ENCODE measurements at regions of chr3 and their contacts with region 1.

Region 1: GRCh38 chr3:197354319-197355001 is 56.0 kb upstream of the DLG1 start:
- DNase-seq: peak; percentile 56 to 72
- ATAC-seq: peak; percentile 49 to 63
- H3K4me3 ChIP-seq: peak overlapping the region; percentile 33 to 43 (median 38)
- H3K27ac ChIP-seq: peak overlapping the region; percentile 73 to 83 (median 80)
- H3K4me1 ChIP-seq: peaks cover 34 to 46% of the 10 kb centered on the region in 2 donors
- H3K27me3 ChIP-seq: no peaks in the 10 kb centered on the region
- CTCF ChIP-seq: no peak
- POLR2A ChIP-seq: peak; percentile 23 to 49

Region 2: DNA sequence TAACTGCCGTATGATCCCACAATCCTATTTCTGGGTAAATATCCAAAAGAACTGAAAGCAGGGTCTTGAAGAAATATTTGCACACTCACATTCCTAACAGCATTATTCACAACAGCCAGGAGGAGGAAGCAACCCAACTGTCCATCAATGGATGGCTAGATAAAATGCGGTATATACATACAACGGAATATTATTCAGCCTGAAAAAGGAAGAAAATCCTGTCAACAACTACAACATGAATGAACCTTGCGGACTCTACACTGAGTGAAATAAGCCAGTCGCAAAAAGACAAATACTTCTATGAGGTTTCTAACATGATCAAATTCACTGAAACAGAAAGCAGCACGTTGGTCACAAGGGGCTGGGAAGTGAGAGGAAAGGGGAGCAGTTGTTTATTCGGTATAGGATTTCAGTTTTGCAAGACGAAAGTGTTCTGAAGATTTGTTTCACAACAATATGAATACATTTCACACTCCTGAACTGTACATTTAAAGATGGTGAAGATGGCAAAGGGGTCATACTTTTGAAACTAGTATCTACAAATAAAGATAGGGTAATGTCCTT is 62.3 kb before region 1 on chr3:
- in situ Hi-C with region 1: no loop called
- intact Hi-C with region 1: loop called (anchors 1 kb)
- DNase-seq: peak; percentile 54 to 56
- ATAC-seq: peak; percentile 92
- H3K4me3 ChIP-seq: peak overlapping the region in 1 of 4 donors; percentile 2
- H3K27ac ChIP-seq: peak overlapping the region; percentile 73 to 87 (median 84)
- H3K4me1 ChIP-seq: peaks cover 53 to 64% of the 10 kb centered on the region in 2 donors
- H3K27me3 ChIP-seq: no peaks in the 10 kb centered on the region
- CTCF ChIP-seq: no peak
- POLR2A ChIP-seq: no peak

Region 3: DNA sequence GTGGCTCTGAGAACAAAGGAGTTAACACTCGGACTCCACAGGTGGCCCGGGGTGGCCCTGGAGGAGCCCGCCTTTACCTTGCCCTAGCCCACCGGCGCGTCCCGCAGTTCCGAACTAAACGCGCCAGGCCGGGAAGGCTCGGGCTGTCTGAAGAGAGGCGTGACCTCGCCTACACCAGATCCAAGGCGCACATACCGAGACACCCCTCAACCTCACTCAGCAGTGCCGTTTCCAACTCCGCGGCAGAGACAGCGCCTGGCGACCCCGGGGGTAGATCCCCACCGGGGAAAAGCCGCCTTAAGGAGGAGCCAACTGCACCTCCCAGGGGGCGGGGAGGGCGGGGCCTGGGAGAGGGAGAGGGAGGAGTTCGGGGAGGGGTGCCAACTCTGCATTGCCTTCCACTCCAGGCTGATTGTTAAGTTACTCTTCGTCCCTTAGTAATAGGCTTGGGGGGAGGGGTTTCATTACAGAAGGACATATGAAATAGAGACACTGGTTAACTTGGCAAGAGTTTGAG is 56.1 kb before region 1 on chr3 and contains the start of gene DLG1:
- in situ Hi-C with region 1: no loop called
- intact Hi-C with region 1: loop called (anchors 2 kb)
- DNase-seq: peak; percentile 83 to 89
- ATAC-seq: peak; percentile 79
- H3K4me3 ChIP-seq: peak within 1 kb of the TSS; percentile 77 to 97 (median 84)
- H3K27ac ChIP-seq: peak within 1 kb of the TSS; percentile 87 to 97 (median 94)
- H3K4me1 ChIP-seq: peaks cover 26 to 29% of the 10 kb centered on the region in 2 donors
- H3K27me3 ChIP-seq: no peaks in the 10 kb centered on the region
- CTCF ChIP-seq: no peak
- POLR2A ChIP-seq: peak; percentile 46 to 56
- total RNA-seq, gene DLG1: 41.4 to 112 (median 61.1) TPM

Region 4: DNA sequence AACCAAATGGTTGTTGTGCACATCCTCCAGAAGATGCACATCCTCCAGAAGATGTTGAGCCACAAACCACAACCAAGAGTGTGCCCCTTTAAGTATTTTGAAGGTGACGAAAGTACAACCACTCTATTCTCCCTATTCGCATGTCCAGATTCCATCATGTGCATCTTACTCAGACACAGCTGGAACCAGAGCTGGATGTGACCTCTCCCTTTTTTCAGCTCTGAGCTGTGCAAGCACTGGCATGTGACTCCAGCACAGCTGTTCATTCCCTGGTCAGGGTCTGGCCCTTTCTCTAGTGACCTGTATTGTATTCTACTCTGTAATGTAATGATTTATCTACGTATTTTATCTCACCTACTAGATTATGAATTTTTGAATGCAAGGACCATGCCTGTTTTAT is 26.8 kb before region 1 on chr3:
- in situ Hi-C with region 1: no loop called
- intact Hi-C with region 1: loop called (anchors 2 kb)
- DNase-seq: peak; percentile 20 to 43
- ATAC-seq: peak; percentile 93 to 95
- H3K4me3 ChIP-seq: no peak overlapping the region
- H3K27ac ChIP-seq: peak overlapping the region in 2 of 4 donors; percentile 47 to 49
- H3K4me1 ChIP-seq: peaks cover 3 to 17% of the 10 kb centered on the region in 2 donors
- H3K27me3 ChIP-seq: no peaks in the 10 kb centered on the region
- CTCF ChIP-seq: no peak
- POLR2A ChIP-seq: no peak

Region 5: GRCh38 chr3:197339841-197340520 is 14.5 kb before region 1 on chr3:
- in situ Hi-C with region 1: no loop called
- intact Hi-C with region 1: no loop called
- DNase-seq: no peak
- ATAC-seq: no peak
- H3K4me3 ChIP-seq: no peak overlapping the region
- H3K27ac ChIP-seq: no peak overlapping the region
- H3K4me1 ChIP-seq: peaks cover 5 to 10% of the 10 kb centered on the region in 2 donors
- H3K27me3 ChIP-seq: no peaks in the 10 kb centered on the region
- CTCF ChIP-seq: no peak
- POLR2A ChIP-seq: no peak

Region 6: GRCh38 chr3:197380786-197381185 is 26.3 kb after region 1 on chr3:
- in situ Hi-C with region 1: no loop called
- intact Hi-C with region 1: loop called (anchors 2 kb)
- DNase-seq: peak; percentile 64 to 71
- ATAC-seq: peak; percentile 77 to 93
- H3K4me3 ChIP-seq: no peak overlapping the region
- H3K27ac ChIP-seq: peak overlapping the region in 3 of 4 donors; percentile 31 to 66 (median 41)
- H3K4me1 ChIP-seq: peaks cover 3% of the 10 kb centered on the region in 2 donors
- H3K27me3 ChIP-seq: no peaks in the 10 kb centered on the region
- CTCF ChIP-seq: no peak
- POLR2A ChIP-seq: no peak